ENCODE measurements at regions of chr3 and their contacts with region 1.

Region 1: GRCh38 chr3:59450946-59451763 is 401.3 kb upstream of the CFAP20DC start:
- DNase-seq: peak; percentile 77
- H3K4me3 Mint-ChIP-seq: peak overlapping the region; percentile 60
- H3K27ac Mint-ChIP-seq: peak overlapping the region; percentile 99
- H3K4me1 Mint-ChIP-seq: peaks cover 63% of the 10 kb centered on the region
- H3K27me3 Mint-ChIP-seq: peaks cover 2% of the 10 kb centered on the region

Region 2: GRCh38 chr3:59386165-59386564 is 65.0 kb before region 1 on chr3:
- CTCF ChIA-PET with region 1: no interaction called
- POLR2A ChIA-PET with region 1: interaction called, 11 read pairs
- DNase-seq: no peak
- H3K4me3 Mint-ChIP-seq: peak overlapping the region; percentile 33
- H3K27ac Mint-ChIP-seq: peak overlapping the region; percentile 90
- H3K4me1 Mint-ChIP-seq: peaks cover 70% of the 10 kb centered on the region
- H3K27me3 Mint-ChIP-seq: no peaks in the 10 kb centered on the region

Measured in activated CD4-positive, alpha-beta memory T cell treated with anti-CD3 and anti-CD28 coated beads, Interleukin-2, amount 10 ng/mL, durations not matched to agents 7 days and 5 days (primary cell).